CD4-positive, alpha-beta T cell (primary cell): ENCODE measurements at regions of chr22 and their contacts with region 1.

Region 1: GRCh38 chr22:30289134-30289979 is at the start of gene CASTOR1:
- DNase-seq: peak; percentile 75 to 96 (median 86)
- ATAC-seq: peak; percentile 78
- H3K4me3 ChIP-seq: peak within 1 kb of the TSS; percentile 75
- H3K4me3 Mint-ChIP-seq: peak within 1 kb of the TSS; percentile 97
- H3K27ac ChIP-seq: peak within 1 kb of the TSS; percentile 51 to 60
- H3K27ac Mint-ChIP-seq: peak within 1 kb of the TSS; percentile 89
- H3K4me1 ChIP-seq: peaks cover 54% of the 10 kb centered on the region
- H3K4me1 Mint-ChIP-seq: peaks cover 55% of the 10 kb centered on the region
- H3K27me3 ChIP-seq: no peaks in the 10 kb centered on the region
- H3K27me3 Mint-ChIP-seq: no peaks in the 10 kb centered on the region
- CTCF ChIP-seq: no peak
- total RNA-seq, gene CASTOR1: 7.9 to 8.8 TPM

Region 2: DNA sequence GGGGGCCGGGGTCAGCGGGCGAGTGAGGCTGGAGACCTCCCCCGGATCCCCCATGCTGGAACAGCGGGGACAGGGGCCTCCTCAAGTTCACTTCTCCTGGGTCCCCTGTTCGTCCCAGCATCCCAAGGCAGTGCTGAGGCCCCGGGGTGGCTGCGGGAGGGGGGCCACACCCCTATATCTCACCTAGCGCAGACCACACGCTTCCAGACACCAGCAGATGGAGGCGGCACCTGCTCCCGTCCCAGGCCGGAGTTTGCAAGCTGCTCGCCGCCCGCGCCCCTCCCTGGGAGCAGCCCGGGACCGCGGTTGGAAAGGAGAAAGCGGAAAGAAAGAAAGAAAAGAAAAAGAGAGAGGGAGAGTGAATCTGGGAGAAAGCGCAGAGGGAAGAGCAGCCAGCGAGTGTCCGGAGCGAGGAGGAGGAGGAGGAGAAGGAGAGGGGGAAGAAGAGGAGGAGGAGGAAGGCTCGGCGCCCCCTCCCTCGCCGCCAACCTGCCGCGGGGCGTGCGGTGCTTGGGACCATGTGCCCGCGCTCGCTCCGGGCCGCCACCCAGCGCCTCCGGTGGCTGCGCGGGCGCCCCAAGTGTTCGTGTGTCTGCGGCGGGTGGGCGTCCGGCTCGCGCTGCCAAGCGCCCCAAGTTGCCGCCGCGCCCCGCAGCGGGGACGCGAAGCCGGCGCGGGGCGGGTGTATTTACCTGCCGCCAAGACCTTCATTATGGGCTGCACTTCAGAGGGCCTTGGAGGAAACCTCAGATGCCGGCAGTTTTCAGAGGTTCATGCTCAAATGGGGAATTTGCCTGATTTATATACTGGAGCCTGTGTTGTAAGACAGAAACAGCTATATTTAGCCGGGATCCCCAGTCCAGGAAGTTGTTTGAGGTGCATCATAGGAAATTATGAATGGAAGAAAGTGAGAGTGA is 43.1 kb before region 1 on chr22 and contains the start of gene LIF:
- CTCF ChIA-PET with region 1: no interaction called
- POLR2A ChIA-PET with region 1: no interaction called
- intact Hi-C with region 1: no loop called
- DNase-seq: peak in 13 of 14 experiments; percentile 23 to 76 (median 38)
- ATAC-seq: peak; percentile 89
- H3K4me3 ChIP-seq: peak within 1 kb of the TSS; percentile 68
- H3K4me3 Mint-ChIP-seq: peak within 1 kb of the TSS; percentile 90
- H3K27ac ChIP-seq: no peak within 1 kb of the TSS
- H3K27ac Mint-ChIP-seq: no peak within 1 kb of the TSS
- H3K4me1 ChIP-seq: peaks cover 51% of the 10 kb centered on the region
- H3K4me1 Mint-ChIP-seq: peaks cover 42% of the 10 kb centered on the region
- H3K27me3 ChIP-seq: peaks cover 0 to 6% of the 10 kb centered on the region in 2 experiments
- H3K27me3 Mint-ChIP-seq: peaks cover 22% of the 10 kb centered on the region
- CTCF ChIP-seq: peak; percentile 30
- total RNA-seq, gene LIF: 0.17 to 0.30 TPM

Region 3: GRCh38 chr22:30262917-30263741 is 26.2 kb before region 1 on chr22:
- CTCF ChIA-PET with region 1: interaction called, 28 read pairs
- POLR2A ChIA-PET with region 1: interaction called, 11 read pairs
- intact Hi-C with region 1: loop called (anchors 1 kb)
- DNase-seq: peak; percentile 68 to 89 (median 76)
- ATAC-seq: no peak
- H3K4me3 ChIP-seq: peak overlapping the region; percentile 21
- H3K4me3 Mint-ChIP-seq: peak overlapping the region; percentile 81
- H3K27ac ChIP-seq: peak overlapping the region in 1 of 2 donors; percentile 14
- H3K27ac Mint-ChIP-seq: peak overlapping the region; percentile 81
- H3K4me1 ChIP-seq: peaks cover 60% of the 10 kb centered on the region
- H3K4me1 Mint-ChIP-seq: peaks cover 49% of the 10 kb centered on the region
- H3K27me3 ChIP-seq: no peaks in the 10 kb centered on the region
- H3K27me3 Mint-ChIP-seq: no peaks in the 10 kb centered on the region
- CTCF ChIP-seq: peak; percentile 100

Region 4: GRCh38 chr22:30310881-30311771 is 21.8 kb after region 1 on chr22:
- CTCF ChIA-PET with region 1: interaction called, 59 read pairs
- POLR2A ChIA-PET with region 1: interaction called, 268 read pairs
- intact Hi-C with region 1: loop called in 1 of 2 experiments (anchors 2 kb)
- DNase-seq: no peak
- ATAC-seq: no peak
- H3K4me3 ChIP-seq: no peak overlapping the region
- H3K4me3 Mint-ChIP-seq: peak overlapping the region; percentile 18
- H3K27ac ChIP-seq: peak overlapping the region; percentile 62 to 86
- H3K27ac Mint-ChIP-seq: peak overlapping the region; percentile 83
- H3K4me1 ChIP-seq: peaks cover 95% of the 10 kb centered on the region
- H3K4me1 Mint-ChIP-seq: peaks cover 94% of the 10 kb centered on the region
- H3K27me3 ChIP-seq: no peaks in the 10 kb centered on the region
- H3K27me3 Mint-ChIP-seq: no peaks in the 10 kb centered on the region
- CTCF ChIP-seq: no peak

Region 5: DNA sequence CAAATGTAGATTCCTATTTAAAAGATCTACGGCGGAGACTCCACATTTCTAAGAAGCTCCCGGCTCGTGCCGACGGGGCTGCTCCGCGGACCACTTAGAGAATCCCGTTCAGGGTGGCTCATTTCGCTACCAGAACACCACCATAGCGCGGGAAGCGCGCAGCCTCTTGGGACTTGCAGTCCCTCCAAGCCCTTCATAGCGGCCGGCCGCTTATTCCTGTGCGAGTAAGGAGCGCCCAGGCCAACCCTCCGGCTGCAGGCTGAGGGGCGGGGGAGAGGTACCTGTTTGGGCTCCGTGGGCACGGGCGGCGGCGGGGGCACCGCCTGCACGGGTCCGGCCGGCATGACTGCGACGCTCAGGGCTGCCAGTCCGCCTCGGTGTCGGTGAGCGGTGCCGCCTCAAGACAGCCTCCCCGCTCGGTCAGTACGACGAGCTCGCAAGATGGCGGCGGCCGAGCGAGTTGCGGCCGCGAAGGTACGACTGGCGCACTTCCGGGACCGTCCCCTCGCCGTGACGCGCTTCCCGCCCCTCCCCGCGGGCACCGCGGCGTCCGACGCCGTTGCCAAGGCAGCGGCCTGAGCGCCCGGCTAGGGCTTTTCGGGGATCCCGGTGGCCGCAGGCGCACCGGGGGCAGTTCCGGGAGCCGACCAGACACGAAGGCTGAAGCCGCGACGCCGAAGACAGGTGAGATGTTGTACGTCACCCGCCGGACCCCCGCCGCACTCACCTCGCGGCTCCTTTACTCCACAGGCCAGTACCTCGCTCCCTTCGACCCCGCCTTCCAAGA is 67.3 kb after region 1 on chr22 and contains the starts of genes CCDC157 and SF3A1:
- CTCF ChIA-PET with region 1: interaction called, 20 read pairs
- POLR2A ChIA-PET with region 1: interaction called, 88 read pairs
- intact Hi-C with region 1: loop called (anchors 1 kb)
- DNase-seq: peak; percentile 70 to 95 (median 80)
- ATAC-seq: peak; percentile 85
- H3K4me3 ChIP-seq: peak within 1 kb of the TSS; percentile 90
- H3K4me3 Mint-ChIP-seq: peak within 1 kb of the TSS; percentile 100
- H3K27ac ChIP-seq: peak within 1 kb of the TSS; percentile 89 to 95
- H3K27ac Mint-ChIP-seq: peak within 1 kb of the TSS; percentile 99
- H3K4me1 ChIP-seq: peaks cover 51% of the 10 kb centered on the region
- H3K4me1 Mint-ChIP-seq: peaks cover 57% of the 10 kb centered on the region
- H3K27me3 ChIP-seq: no peaks in the 10 kb centered on the region
- H3K27me3 Mint-ChIP-seq: no peaks in the 10 kb centered on the region
- CTCF ChIP-seq: no peak
- total RNA-seq, gene CCDC157: 8.3 to 10.1 TPM
- total RNA-seq, gene SF3A1: 335 to 388 TPM